ENCODE measurements at regions of chr12 and their contacts with region 1.

Region 1: GRCh38 chr12:98572010-98572409 is 21.5 kb upstream of the SLC25A3 start:
- DNase-seq: no peak
- H3K4me3 ChIP-seq: no peak overlapping the region
- H3K27ac ChIP-seq: no peak overlapping the region
- H3K4me1 ChIP-seq: no peaks in the 10 kb centered on the region
- H3K27me3 ChIP-seq: no peaks in the 10 kb centered on the region
- CTCF ChIP-seq: peak; percentile 19 to 39
- POLR2A ChIP-seq: no peak

Region 2: DNA sequence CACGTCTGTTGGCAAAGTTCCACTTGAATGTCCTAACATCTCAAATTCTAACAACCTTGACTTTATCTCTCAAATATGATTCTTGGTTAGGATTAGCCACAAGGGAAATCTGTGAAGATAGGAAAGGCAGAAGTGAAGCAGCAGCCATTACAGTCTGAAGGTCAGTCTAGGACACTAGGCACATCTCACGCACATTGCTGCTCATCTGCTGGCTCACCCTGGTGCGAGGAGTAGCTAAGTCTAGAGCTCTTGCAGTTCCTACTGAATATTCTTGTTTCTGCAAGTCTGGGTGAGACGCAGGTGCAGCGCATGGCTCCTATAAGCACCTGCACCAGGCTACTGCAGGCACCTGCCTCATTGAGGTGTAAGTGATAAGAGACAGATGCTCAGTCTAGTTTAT is 15.1 kb after region 1 on chr12:
- CTCF ChIA-PET with region 1: interaction called, 31 read pairs
- POLR2A ChIA-PET with region 1: no interaction called
- dilution Hi-C with region 1: no loop called
- intact Hi-C with region 1: loop called (anchors 2 kb)
- DNase-seq: no peak
- H3K4me3 ChIP-seq: no peak overlapping the region
- H3K27ac ChIP-seq: no peak overlapping the region
- H3K4me1 ChIP-seq: no peaks in the 10 kb centered on the region
- H3K27me3 ChIP-seq: no peaks in the 10 kb centered on the region
- CTCF ChIP-seq: no peak
- POLR2A ChIP-seq: no peak

Region 3: GRCh38 chr12:98644711-98645402 is 72.8 kb after region 1 on chr12 and contains the starts of genes APAF1 and IKBIP:
- CTCF ChIA-PET with region 1: interaction called, 96 read pairs
- POLR2A ChIA-PET with region 1: no interaction called
- dilution Hi-C with region 1: no loop called
- intact Hi-C with region 1: loop called (anchors 2 kb)
- DNase-seq: peak; percentile 97
- H3K4me3 ChIP-seq: peak within 1 kb of the TSS; percentile 67 to 92 (median 87)
- H3K27ac ChIP-seq: peak within 1 kb of the TSS; percentile 67
- H3K4me1 ChIP-seq: peaks cover 11% of the 10 kb centered on the region
- H3K27me3 ChIP-seq: no peaks in the 10 kb centered on the region
- CTCF ChIP-seq: no peak
- POLR2A ChIP-seq: peak; percentile 65
- total RNA-seq, gene APAF1: 32.1 and 35.2 TPM in 2 replicates
- total RNA-seq, gene IKBIP: 56.2 and 56.8 TPM in 2 replicates

Region 4: GRCh38 chr12:98671459-98671858 is 99.4 kb after region 1 on chr12:
- CTCF ChIA-PET with region 1: no interaction called
- POLR2A ChIA-PET with region 1: no interaction called
- dilution Hi-C with region 1: no loop called
- intact Hi-C with region 1: no loop called
- DNase-seq: peak; percentile 49
- H3K4me3 ChIP-seq: no peak overlapping the region
- H3K27ac ChIP-seq: no peak overlapping the region
- H3K4me1 ChIP-seq: peaks cover 9% of the 10 kb centered on the region
- H3K27me3 ChIP-seq: no peaks in the 10 kb centered on the region
- CTCF ChIP-seq: no peak
- POLR2A ChIP-seq: no peak

Region 5: GRCh38 chr12:98743347-98743953 is 171.4 kb after region 1 on chr12:
- CTCF ChIA-PET with region 1: interaction called, 9 read pairs
- POLR2A ChIA-PET with region 1: no interaction called
- dilution Hi-C with region 1: no loop called
- intact Hi-C with region 1: loop called (anchors 2 kb)
- DNase-seq: peak; percentile 42
- H3K4me3 ChIP-seq: no peak overlapping the region
- H3K27ac ChIP-seq: no peak overlapping the region
- H3K4me1 ChIP-seq: peaks cover 8% of the 10 kb centered on the region
- H3K27me3 ChIP-seq: peaks cover 11 to 12% of the 10 kb centered on the region in 2 experiments
- CTCF ChIP-seq: peak; percentile 75 to 78
- POLR2A ChIP-seq: no peak

Measured in endothelial cell of umbilical vein (primary cell).